ENCODE measurements at regions of chr15 and their contacts with region 1.

Region 1: DNA sequence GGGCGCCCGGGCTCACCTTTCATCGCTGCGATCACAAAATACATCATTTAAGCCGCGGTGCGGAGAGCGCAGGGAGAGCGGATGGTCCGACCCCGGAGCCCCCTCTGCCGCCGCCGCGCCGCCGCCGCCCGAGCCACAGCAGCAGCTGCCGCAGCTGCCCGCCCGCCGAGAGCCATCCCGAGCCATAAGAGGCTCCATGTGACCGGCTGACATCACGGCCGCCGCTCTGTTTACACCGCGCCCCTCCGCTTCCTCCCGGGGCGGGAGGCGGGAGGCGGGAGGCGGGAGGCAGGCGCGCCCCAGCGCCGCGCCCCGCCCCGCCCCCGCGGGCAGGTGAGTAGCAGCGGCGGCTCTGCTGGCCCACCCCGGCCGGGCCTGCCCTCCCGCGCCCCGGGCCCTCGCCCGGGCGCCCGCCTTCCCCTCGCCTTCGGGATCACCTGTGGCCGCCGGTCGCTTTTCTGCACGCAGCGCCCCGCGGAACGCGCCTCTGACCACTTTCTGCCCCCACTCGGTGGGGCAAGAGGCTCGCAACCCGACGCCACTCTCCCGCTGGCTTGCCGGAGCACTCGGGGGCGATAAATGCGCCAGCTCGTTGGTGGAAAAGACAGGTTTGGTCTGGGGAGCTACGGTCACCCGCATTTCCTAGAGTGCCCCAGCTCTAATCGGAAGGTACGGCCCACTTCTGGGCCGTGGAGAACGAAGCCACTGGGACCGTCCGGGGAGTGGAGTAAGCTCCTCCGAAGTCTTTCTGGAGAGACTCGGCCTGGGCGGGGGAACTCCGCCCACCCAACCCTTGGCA is 113.6 kb upstream of the ICE2 start:
- DNase-seq: no peak
- ATAC-seq: peak; percentile 87
- H3K4me3 ChIP-seq: peak overlapping the region; percentile 35 to 41
- H3K27ac ChIP-seq: no peak overlapping the region
- H3K4me1 ChIP-seq: peaks cover 10% of the 10 kb centered on the region
- H3K27me3 ChIP-seq: peaks cover 48% of the 10 kb centered on the region
- CTCF ChIP-seq: 0 out of 2 replicates have a peak, but pooled peaks have one; percentile 2

Region 2: GRCh38 chr15:60548101-60548500 is 44.5 kb before region 1 on chr15:
- CTCF ChIA-PET with region 1: interaction called, 12 read pairs
- POLR2A ChIA-PET with region 1: no interaction called
- in situ Hi-C with region 1: no loop called
- intact Hi-C with region 1: no loop called
- DNase-seq: no peak
- ATAC-seq: no peak
- H3K4me3 ChIP-seq: no peak overlapping the region
- H3K27ac ChIP-seq: no peak overlapping the region
- H3K4me1 ChIP-seq: no peaks in the 10 kb centered on the region
- H3K27me3 ChIP-seq: peaks cover 3% of the 10 kb centered on the region; the same call in 1 of the 2 replicates
- CTCF ChIP-seq: no peak

Region 3: GRCh38 chr15:61220125-61220524 is 627.6 kb after region 1 on chr15:
- CTCF ChIA-PET with region 1: no interaction called
- POLR2A ChIA-PET with region 1: no interaction called
- in situ Hi-C with region 1: no loop called
- intact Hi-C with region 1: no loop called
- DNase-seq: no peak
- ATAC-seq: no peak
- H3K4me3 ChIP-seq: no peak overlapping the region
- H3K27ac ChIP-seq: no peak overlapping the region
- H3K4me1 ChIP-seq: no peaks in the 10 kb centered on the region
- H3K27me3 ChIP-seq: peaks cover 13% of the 10 kb centered on the region
- CTCF ChIP-seq: no peak

Region 4: DNA sequence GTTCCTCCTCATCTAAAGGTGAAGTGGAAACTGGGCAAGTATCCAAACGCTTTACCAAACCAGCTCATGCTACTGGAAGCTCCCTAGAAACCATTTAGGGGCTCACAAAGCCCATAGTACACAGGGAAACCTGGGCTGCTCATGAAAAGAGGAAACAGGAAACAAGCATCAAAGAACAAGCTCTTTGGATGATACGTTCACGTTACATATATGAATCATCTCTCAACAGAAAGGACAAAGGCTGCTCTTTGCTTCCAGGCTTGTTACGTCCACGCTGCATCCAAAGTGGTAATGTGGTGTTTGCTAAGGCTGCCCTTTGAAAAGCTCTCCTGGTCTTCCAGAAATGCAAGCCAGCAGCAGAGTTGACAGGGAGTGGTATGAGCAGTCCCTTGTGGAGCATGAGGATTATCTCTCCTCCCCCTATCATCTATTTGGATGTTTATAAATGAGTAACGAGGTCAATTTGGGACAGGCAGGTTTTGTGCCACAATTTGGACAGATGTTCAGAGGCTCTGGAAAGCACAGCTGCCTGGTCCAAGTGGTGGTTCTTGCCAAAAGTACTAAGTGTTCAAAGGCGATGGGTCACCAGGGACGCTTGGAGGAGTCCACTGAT is 734.6 kb after region 1 on chr15:
- CTCF ChIA-PET with region 1: no interaction called
- POLR2A ChIA-PET with region 1: no interaction called
- in situ Hi-C with region 1: no loop called
- intact Hi-C with region 1: no loop called
- DNase-seq: no peak
- ATAC-seq: no peak
- H3K4me3 ChIP-seq: no peak overlapping the region
- H3K27ac ChIP-seq: no peak overlapping the region
- H3K4me1 ChIP-seq: no peaks in the 10 kb centered on the region
- H3K27me3 ChIP-seq: no peaks in the 10 kb centered on the region
- CTCF ChIP-seq: no peak